Psoas muscle (tissue), 8 donors: ENCODE measurements at regions of chr12 and their contacts with region 1.

Region 1: GRCh38 chr12:46332260-46332659 is 40.3 kb downstream of the SLC38A2 start:
- DNase-seq: no peak
- ATAC-seq: no peak
- H3K4me3 ChIP-seq: no peak overlapping the region
- H3K27ac ChIP-seq: no peak overlapping the region
- H3K4me1 ChIP-seq: no peaks in the 10 kb centered on the region
- H3K27me3 ChIP-seq: no peaks in the 10 kb centered on the region
- CTCF ChIP-seq: no peak

Region 2: DNA sequence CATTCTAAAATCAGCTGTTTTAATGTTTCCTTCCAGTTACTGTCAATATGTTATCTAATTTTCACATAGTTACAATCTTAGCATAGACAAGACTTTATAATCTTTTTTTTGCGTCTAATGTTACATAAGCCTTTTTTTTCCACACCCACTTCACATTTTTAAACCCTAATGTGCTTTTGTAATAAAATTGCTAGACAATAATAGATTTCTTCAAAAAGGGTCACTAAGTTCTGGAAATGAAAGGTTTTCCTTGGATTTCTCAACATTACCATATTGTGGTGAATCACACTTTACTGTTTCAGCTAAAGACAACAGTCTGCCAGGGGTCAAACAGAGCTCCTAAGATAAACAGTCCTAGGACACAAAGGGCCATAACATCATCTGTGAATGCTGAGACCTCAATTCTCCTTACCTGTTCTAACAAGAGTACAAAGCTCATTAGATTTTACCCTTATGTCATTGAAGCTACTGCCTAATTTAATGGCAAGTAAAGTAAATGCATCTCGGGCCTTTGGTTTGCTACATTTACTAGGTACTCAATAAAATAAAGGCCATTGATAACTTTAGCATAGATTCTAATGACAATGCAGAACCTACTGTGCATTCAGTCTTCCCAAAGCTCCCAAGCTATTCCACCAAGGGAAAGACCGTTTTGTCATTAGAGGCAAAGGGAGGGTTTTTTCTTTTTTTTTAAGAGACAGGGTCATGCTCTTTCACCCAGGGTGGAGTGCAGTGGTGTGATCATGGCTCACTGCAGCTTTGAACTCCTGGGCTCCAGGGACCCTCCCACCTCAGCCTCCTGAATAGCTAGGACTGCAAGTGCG is 151.5 kb after region 1 on chr12:
- intact Hi-C with region 1: no loop called
- DNase-seq: no peak
- ATAC-seq: no peak
- H3K4me3 ChIP-seq: no peak overlapping the region
- H3K27ac ChIP-seq: no peak overlapping the region
- H3K4me1 ChIP-seq: no peaks in the 10 kb centered on the region
- H3K27me3 ChIP-seq: no peaks in the 10 kb centered on the region
- CTCF ChIP-seq: no peak

Region 3: GRCh38 chr12:47021298-47021697 is 689.0 kb after region 1 on chr12:
- intact Hi-C with region 1: loop called in 1 of 2 experiments (anchors 10 kb)
- DNase-seq: no peak
- ATAC-seq: peak in 3 of 4 donors; percentile 49 to 66 (median 55)
- H3K4me3 ChIP-seq: no peak overlapping the region
- H3K27ac ChIP-seq: no peak overlapping the region
- H3K4me1 ChIP-seq: peaks cover 3% of the 10 kb centered on the region
- H3K27me3 ChIP-seq: no peaks in the 10 kb centered on the region
- CTCF ChIP-seq: peak; percentile 73